Activated CD8-positive, alpha-beta T cell treated with anti-CD3 and anti-CD28 coated beads, Interleukin-2, amount 10 ng/mL, durations not matched to agents 7 days and 5 days (primary cell): ENCODE measurements at regions of chr6 and their contacts with region 1.

Region 1: DNA sequence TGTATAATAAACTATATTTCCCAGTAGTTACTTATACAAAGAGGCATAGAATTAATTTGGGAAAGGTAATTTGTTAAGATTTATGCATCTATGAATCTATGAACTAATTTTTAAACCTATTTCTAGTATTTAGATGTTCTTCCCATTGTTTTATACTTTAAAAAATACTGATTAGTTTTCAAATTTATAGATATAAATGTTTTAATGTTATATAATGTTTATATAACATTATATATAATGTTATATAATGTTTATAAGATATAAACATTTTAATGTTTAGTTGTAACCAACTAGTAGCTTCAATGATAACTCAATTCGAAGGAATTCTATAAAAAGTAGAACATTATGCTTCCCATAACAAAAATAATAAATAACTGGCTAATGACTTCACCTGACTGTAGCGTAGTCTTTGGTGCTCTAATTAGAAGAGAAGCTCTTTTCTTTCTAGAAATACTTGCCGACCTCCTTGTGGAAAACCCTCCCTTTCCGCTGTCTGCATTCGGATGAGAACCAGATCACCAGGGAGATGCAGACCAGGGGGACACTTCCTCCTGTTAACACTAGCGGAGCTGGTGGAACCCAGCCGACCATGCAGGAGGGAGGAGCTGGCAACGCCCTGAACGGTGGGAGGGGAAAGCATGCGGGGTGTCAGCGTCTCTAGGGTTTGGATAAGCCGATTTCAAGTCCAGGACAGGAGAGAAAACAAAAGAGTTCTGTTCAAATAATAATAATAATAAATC is 158.4 kb downstream of the OR2B2 start:
- DNase-seq: peak; percentile 86
- ATAC-seq: peak; percentile 69
- H3K4me3 Mint-ChIP-seq: peak overlapping the region; percentile 90
- H3K27ac Mint-ChIP-seq: peak overlapping the region; percentile 76
- H3K4me1 Mint-ChIP-seq: peaks cover 41% of the 10 kb centered on the region
- H3K27me3 Mint-ChIP-seq: peaks cover 6% of the 10 kb centered on the region

Region 2: DNA sequence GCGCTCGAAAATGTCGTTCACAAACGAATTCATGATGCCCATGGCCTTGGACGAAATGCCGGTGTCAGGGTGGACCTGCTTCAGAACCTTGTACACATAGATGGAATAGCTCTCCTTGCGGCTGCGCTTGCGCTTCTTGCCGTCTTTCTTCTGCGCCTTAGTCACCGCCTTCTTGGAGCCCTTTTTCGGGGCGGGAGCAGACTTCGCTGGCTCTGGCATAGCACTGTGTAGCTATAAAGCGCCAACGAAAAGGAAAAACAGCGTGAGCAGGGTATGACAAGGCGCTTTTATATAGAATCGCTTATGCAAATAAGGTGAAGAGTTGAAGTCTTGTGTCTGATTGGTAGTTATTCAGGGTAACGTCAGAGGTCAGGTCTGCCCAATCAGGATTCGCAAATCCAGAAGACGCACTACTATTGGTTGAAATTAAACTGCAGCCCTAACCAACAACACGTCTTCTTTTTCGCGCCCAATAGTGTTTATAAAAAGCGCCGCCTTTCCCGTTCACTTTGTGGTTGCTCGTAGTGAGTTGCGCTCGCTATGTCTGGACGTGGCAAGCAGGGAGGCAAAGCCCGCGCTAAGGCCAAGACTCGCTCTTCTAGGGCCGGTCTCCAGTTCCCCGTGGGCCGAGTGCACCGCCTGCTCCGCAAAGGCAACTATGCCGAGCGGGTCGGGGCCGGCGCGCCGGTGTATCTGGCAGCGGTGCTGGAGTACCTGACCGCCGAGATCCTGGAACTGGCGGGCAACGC is 621.1 kb before region 1 on chr6:
- CTCF ChIA-PET with region 1: interaction called, 7 read pairs
- POLR2A ChIA-PET with region 1: interaction called, 12 read pairs
- DNase-seq: peak; percentile 95
- ATAC-seq: peak; percentile 76
- H3K4me3 Mint-ChIP-seq: no peak overlapping the region
- H3K27ac Mint-ChIP-seq: no peak overlapping the region
- H3K4me1 Mint-ChIP-seq: peaks cover 68% of the 10 kb centered on the region
- H3K27me3 Mint-ChIP-seq: no peaks in the 10 kb centered on the region

Region 3: DNA sequence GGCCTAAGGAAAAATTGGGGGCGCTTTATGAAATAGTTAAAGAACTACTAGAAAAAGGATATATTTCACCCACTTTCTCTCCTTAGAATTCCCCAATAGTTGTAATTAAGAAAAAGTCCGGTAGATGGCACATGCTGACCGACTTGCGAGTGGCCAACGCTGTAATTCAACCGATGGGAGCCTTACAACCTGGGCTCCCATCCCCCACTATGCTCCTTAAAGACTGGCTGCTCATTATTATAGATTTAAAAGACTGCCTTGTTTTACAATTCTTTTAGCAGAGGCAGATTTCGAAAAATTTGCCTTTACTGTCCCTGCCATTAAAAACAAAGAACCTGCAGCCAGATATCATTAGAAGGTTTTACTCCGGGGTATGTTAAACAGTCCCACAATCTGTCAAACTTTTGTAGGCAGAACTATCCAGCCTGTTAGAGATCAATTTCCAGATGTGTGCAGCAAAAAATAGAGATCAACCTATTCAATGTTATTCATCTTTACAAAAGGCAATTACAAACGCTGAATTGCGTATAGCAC is 564.9 kb before region 1 on chr6:
- CTCF ChIA-PET with region 1: interaction called, 12 read pairs
- POLR2A ChIA-PET with region 1: no interaction called
- DNase-seq: peak; percentile 69
- ATAC-seq: peak; percentile 90
- H3K4me3 Mint-ChIP-seq: peak overlapping the region; percentile 84
- H3K27ac Mint-ChIP-seq: peak overlapping the region; percentile 50
- H3K4me1 Mint-ChIP-seq: peaks cover 16% of the 10 kb centered on the region
- H3K27me3 Mint-ChIP-seq: no peaks in the 10 kb centered on the region

Region 4: GRCh38 chr6:27479319-27480182 is 274.3 kb before region 1 on chr6:
- CTCF ChIA-PET with region 1: interaction called, 13 read pairs
- POLR2A ChIA-PET with region 1: interaction called, 4 read pairs
- DNase-seq: peak; percentile 89
- ATAC-seq: peak; percentile 63
- H3K4me3 Mint-ChIP-seq: no peak overlapping the region
- H3K27ac Mint-ChIP-seq: no peak overlapping the region
- H3K4me1 Mint-ChIP-seq: peaks cover 2% of the 10 kb centered on the region
- H3K27me3 Mint-ChIP-seq: peaks cover 4% of the 10 kb centered on the region

Region 5: GRCh38 chr6:27608916-27609883 is 144.6 kb before region 1 on chr6:
- CTCF ChIA-PET with region 1: interaction called, 10 read pairs
- POLR2A ChIA-PET with region 1: no interaction called
- DNase-seq: peak; percentile 49
- ATAC-seq: no peak
- H3K4me3 Mint-ChIP-seq: no peak overlapping the region
- H3K27ac Mint-ChIP-seq: no peak overlapping the region
- H3K4me1 Mint-ChIP-seq: peaks cover 21% of the 10 kb centered on the region
- H3K27me3 Mint-ChIP-seq: peaks cover 23% of the 10 kb centered on the region

Region 6: GRCh38 chr6:27650620-27651370 is 103.0 kb before region 1 on chr6:
- CTCF ChIA-PET with region 1: no interaction called
- POLR2A ChIA-PET with region 1: no interaction called
- DNase-seq: peak; percentile 71
- ATAC-seq: no peak
- H3K4me3 Mint-ChIP-seq: no peak overlapping the region
- H3K27ac Mint-ChIP-seq: no peak overlapping the region
- H3K4me1 Mint-ChIP-seq: peaks cover 22% of the 10 kb centered on the region
- H3K27me3 Mint-ChIP-seq: peaks cover 14% of the 10 kb centered on the region

Region 7: GRCh38 chr6:27687154-27688013 is 66.5 kb before region 1 on chr6:
- CTCF ChIA-PET with region 1: interaction called, 14 read pairs
- POLR2A ChIA-PET with region 1: no interaction called
- DNase-seq: peak; percentile 86
- ATAC-seq: peak; percentile 80
- H3K4me3 Mint-ChIP-seq: peak overlapping the region; percentile 85
- H3K27ac Mint-ChIP-seq: peak overlapping the region; percentile 86
- H3K4me1 Mint-ChIP-seq: peaks cover 28% of the 10 kb centered on the region
- H3K27me3 Mint-ChIP-seq: peaks cover 15% of the 10 kb centered on the region

Region 8: DNA sequence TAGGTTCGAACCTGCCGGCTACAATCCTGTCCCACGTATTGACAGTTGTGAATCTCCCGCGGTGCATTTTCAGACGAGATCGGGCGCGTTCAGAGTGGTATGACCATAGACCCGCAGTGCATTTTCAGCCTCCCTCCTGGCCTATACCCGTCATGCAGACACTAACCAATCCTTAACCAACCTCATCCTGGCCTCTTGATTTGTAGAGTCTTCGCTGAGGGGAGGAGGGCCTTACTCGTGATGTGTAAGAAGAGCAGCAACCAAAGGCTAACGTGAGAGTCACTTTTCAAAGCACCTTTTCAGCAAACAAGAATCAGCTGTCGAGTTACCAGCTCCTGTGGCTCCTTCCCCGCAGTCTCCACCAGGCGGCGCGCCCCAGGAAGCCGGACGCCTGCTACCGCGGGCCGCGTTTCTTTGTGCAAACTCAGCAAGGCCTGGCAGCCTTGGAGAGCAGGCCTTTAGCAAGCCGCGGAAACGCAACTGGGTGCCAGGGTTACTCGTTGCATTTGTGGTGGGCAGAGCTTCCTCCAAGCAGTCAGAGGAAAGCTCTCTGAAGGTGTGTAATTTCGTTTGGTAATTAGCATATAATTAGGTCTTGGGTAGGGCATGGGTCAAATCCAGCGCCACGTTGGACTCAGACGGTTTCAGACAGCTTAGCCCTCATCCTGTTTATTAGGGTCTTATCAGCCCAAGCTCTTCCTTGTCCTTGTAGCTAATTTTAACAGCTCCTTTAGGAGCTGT is 18.6 kb after region 1 on chr6:
- CTCF ChIA-PET with region 1: interaction called, 66 read pairs
- POLR2A ChIA-PET with region 1: interaction called, 6 read pairs
- DNase-seq: peak; percentile 93
- ATAC-seq: peak; percentile 100
- H3K4me3 Mint-ChIP-seq: no peak overlapping the region
- H3K27ac Mint-ChIP-seq: peak overlapping the region; percentile 8
- H3K4me1 Mint-ChIP-seq: peaks cover 22% of the 10 kb centered on the region
- H3K27me3 Mint-ChIP-seq: peaks cover 20% of the 10 kb centered on the region